ENCODE measurements at regions of chr2 and their contacts with region 1.

Region 1: GRCh38 chr2:230160112-230160660 is 59.6 kb downstream of the SP110 start:
- DNase-seq: peak; percentile 38 to 66 (median 61)
- H3K4me3 ChIP-seq: no peak overlapping the region
- H3K27ac ChIP-seq: no peak overlapping the region
- H3K4me1 ChIP-seq: peaks cover 1% of the 10 kb centered on the region
- H3K27me3 ChIP-seq: no peaks in the 10 kb centered on the region
- CTCF ChIP-seq: peak; percentile 55 to 76 (median 70)
- EP300 ChIP-seq: no peak
- POLR2A ChIP-seq: no peak

Region 2: DNA sequence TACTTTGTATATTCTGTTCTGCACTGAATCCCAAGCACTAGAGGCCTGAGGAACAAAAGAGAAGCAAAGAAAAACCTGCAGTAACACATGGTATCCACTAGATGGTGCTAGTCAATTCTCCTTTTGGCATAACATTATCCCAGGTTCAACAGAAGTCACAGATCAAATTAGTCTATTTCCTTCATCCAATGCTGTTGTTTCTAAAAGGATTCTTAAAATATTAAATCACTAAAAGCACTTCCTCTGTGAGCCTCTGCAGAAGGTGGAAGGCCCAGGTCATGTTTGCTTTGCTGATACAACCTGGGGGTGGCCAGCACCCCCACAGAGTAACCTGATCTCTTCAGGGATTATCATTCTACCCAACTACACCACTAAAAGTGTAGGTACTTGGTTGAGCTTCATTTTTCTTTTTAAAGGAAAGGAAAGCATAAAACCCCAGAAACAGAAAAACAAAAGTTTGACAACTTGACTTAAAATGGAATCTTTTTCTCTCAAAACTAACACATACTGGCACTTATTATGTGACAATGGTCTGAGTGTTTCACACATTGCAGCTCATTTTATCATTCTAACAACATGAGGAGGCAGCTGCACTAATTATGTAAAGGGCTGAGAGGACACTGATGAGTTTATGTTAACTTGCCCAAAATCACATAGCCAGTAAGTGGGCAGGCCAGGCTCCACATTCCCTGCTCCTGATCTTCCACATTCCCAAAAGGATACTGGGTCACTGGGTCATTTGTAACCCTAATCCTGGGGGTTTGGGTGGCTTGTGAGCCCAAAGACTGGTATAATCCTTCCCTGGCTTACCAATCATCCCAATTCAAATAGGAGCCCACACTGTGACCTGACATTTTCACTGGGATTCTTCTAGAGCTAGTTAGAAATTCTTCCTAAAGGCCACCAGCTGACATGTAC is 379.1 kb before region 1 on chr2:
- intact Hi-C with region 1: loop called in 1 of 4 experiments (anchors 5 kb)
- DNase-seq: no peak
- H3K4me3 ChIP-seq: no peak overlapping the region
- H3K27ac ChIP-seq: no peak overlapping the region
- H3K4me1 ChIP-seq: no peaks in the 10 kb centered on the region
- H3K27me3 ChIP-seq: no peaks in the 10 kb centered on the region
- CTCF ChIP-seq: peak; percentile 59 to 91 (median 60)
- EP300 ChIP-seq: no peak
- POLR2A ChIP-seq: no peak

Region 3: DNA sequence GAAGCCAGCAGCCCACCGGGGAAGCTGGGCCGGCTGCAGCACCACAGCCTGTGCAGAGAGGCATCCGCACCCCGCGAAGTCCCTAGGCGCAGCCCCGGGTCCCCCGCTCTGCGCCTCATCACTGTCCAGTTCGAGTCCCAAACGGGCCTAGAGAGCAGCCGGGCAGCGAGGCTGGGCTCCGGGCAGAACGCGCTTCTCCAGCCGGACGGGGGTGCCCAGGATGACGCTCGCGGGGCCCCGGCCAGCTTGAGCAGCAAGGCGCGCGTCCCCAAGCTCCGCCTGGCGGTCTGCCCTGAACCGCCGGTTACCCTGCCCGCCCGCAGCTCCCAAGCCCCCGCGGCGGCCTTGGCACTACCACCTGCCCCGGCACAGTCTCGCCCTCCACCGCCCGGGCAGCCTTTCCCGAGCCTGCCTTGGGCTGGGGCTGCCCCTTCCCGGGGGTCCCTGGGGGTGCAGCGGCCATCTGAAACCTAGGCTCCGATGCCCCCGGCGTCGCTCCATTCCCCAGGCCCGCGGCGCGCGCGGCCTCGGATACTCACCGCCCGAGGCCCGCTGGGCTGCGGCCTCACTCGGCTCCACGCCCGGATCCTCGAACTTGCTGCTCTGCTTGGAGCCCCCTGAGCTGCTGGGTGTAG is 92.1 kb before region 1 on chr2:
- intact Hi-C with region 1: loop called in 2 of 4 experiments (anchors 5 kb)
- DNase-seq: peak; percentile 58 to 79 (median 75)
- H3K4me3 ChIP-seq: peak overlapping the region; percentile 65
- H3K27ac ChIP-seq: peak overlapping the region; percentile 47 to 92
- H3K4me1 ChIP-seq: no peaks in the 10 kb centered on the region
- H3K27me3 ChIP-seq: no peaks in the 10 kb centered on the region
- CTCF ChIP-seq: peak in 1 of 3 donors; percentile 31
- EP300 ChIP-seq: no peak
- POLR2A ChIP-seq: no peak

Region 4: DNA sequence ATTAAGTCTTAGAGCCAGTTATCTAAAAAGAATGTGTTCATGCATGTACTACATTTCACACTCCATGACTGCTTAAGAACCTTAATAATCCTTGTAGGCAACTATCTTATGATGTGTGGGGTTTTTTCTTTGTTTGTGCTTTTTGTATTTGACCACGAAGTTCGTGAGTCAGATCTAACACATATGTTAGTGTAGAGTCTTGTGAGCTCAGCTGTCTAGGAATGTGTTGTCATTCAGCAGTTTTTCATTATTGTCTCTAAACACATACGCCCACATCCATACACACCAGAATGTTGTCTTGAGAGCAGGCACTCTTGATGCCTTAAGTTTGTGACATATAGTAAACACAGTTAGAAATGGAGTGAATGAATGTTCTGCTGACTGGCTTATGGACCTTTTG is 590.9 kb after region 1 on chr2:
- intact Hi-C with region 1: no loop called
- DNase-seq: no peak
- H3K4me3 ChIP-seq: no peak overlapping the region
- H3K27ac ChIP-seq: no peak overlapping the region
- H3K4me1 ChIP-seq: no peaks in the 10 kb centered on the region
- H3K27me3 ChIP-seq: no peaks in the 10 kb centered on the region
- CTCF ChIP-seq: no peak
- EP300 ChIP-seq: no peak
- POLR2A ChIP-seq: no peak